Dendritic cell treated with granulocyte-macrophage colony-stimulating factor and Interleukin-4, amounts not matched to agents 40 ng/mL and 50 ng/mL, for 4 days (primary cell): ENCODE measurements at regions of chr1 and their contacts with region 1.

Region 1: DNA sequence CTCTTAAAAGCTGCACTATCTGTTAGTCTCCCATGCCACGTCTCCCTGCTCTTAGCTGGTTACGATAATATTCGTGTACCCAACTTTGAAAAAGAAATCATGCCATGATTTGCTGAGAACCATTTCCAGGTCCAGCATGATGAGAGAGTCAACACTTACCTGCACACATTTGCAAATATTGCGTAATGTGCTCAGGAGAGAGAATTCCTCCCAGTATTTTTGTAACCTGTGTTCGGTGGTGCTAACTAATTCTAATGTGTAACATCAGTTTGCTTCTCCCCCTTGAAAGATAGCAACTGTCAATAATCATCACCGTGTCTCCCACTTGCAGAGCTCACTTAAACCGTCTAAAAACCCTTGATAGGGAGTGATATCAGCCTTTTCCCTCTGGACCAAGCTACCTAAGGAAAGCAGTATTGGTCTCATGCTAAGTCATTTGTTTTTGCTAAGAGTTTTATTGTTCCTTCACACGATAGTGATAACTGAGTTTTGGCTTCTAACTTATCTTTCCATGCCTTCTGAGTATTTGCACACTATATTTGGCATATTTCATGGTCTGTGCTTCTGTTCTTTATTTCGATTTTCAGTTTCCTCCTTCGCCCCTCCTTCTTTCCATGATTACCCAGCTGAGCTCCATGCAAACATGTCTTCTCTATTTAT is 61.1 kb upstream of the IRF2BP2 start:
- H3K4me3 Mint-ChIP-seq: no peak overlapping the region
- H3K27ac Mint-ChIP-seq: no peak overlapping the region
- H3K4me1 Mint-ChIP-seq: peaks cover 24% of the 10 kb centered on the region
- H3K27me3 Mint-ChIP-seq: no peaks in the 10 kb centered on the region

Region 2: GRCh38 chr1:234745844-234746797 is 75.0 kb after region 1 on chr1:
- intact Hi-C with region 1: loop called (anchors 2 kb)
- H3K4me3 Mint-ChIP-seq: no peak overlapping the region
- H3K27ac Mint-ChIP-seq: peak overlapping the region; percentile 2
- H3K4me1 Mint-ChIP-seq: peaks cover 48% of the 10 kb centered on the region
- H3K27me3 Mint-ChIP-seq: no peaks in the 10 kb centered on the region